MCF 10A (cell line): ENCODE measurements at regions of chr3 and their contacts with region 1.

Region 1: GRCh38 chr3:63911873-63912767 is at the start of gene SCAANT1:
- DNase-seq: peak; percentile 92
- H3K4me3 Mint-ChIP-seq: peak within 1 kb of the TSS; percentile 77
- H3K27ac Mint-ChIP-seq: peak within 1 kb of the TSS; percentile 91
- H3K4me1 Mint-ChIP-seq: no peaks in the 10 kb centered on the region
- H3K27me3 Mint-ChIP-seq: no peaks in the 10 kb centered on the region
- CTCF ChIP-seq: no peak
- total RNA-seq, gene SCAANT1: not detected in 2 replicates

Region 2: DNA sequence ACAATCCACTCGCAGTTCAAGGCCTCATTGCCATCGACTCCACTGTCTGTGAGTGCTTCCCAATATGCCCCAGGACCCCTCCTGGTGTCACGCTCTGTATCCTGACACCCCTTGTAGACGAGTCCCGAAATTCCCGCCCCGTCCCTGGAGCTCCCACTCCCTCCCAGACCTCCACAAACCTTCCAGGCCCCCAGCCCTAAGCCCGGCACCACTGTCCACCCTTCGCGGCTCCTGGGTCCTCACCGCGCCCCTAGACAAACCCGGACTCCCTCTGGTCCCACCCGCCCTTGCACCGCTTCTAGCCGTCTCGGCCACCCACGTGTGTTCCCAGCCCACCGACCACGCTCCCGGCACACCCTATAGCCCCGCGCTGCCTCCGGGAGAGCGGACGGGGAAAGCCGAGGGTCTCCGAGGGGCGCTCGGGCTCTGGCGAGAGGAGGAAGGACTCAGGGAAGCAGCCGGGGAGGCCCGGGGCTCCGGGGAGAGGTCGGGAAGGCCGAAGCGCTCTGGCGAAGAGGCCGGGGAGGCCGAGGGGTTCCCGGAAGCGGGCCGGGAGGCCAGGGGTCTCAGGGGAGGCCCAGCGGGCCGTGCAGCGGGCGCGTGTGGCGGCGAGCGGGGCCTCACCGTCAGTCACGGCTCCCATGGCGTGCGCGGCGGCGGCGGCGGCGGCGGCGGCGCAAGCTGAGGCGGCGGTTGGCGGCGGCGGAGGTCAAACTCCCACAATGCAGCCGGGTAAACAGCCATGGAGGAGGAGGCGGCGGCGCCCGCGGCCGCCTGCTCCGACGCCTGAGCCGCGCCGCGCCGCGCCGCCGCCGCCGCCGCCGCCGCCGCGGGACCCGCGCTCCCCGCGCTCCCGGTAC is 48.7 kb before region 1 on chr3 and contains the starts of genes ATXN7 and THOC7:
- CTCF ChIA-PET with region 1: no interaction called
- POLR2A ChIA-PET with region 1: interaction called, 11 read pairs
- intact Hi-C with region 1: loop called (anchors 1 kb)
- DNase-seq: peak; percentile 68
- H3K4me3 Mint-ChIP-seq: peak within 1 kb of the TSS; percentile 84
- H3K27ac Mint-ChIP-seq: peak within 1 kb of the TSS; percentile 84
- H3K4me1 Mint-ChIP-seq: peaks cover 46% of the 10 kb centered on the region
- H3K27me3 Mint-ChIP-seq: no peaks in the 10 kb centered on the region
- CTCF ChIP-seq: no peak
- total RNA-seq, gene ATXN7: 29.2 and 36.7 TPM in 2 replicates
- total RNA-seq, gene THOC7: 117 and 123 TPM in 2 replicates

Region 3: GRCh38 chr3:63937661-63938651 is 25.8 kb after region 1 on chr3:
- CTCF ChIA-PET with region 1: interaction called, 5 read pairs
- POLR2A ChIA-PET with region 1: interaction called, 15 read pairs
- intact Hi-C with region 1: no loop called
- DNase-seq: peak; percentile 66
- H3K4me3 Mint-ChIP-seq: no peak overlapping the region
- H3K27ac Mint-ChIP-seq: peak overlapping the region; percentile 57
- H3K4me1 Mint-ChIP-seq: peaks cover 44% of the 10 kb centered on the region
- H3K27me3 Mint-ChIP-seq: no peaks in the 10 kb centered on the region
- CTCF ChIP-seq: no peak

Region 4: DNA sequence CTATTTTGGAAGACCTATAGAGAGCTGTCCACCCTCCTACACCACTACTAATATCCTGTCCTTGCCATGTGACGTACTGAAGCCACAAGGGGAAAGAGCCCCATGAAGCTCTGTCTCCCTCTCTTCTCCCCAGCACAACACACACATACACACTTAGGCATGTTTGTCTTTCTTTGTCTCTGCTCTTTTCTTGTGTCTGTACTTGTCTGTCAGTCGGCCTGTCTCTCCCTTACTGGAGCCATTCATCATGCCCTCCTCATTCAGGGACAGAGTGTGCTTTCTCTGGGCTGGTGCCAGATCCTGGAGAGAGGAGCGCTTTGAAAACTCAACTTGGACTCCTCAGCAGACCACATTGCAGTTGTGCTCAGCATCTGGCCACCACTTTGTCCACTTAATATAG is 63.6 kb after region 1 on chr3:
- CTCF ChIA-PET with region 1: interaction called, 5 read pairs
- POLR2A ChIA-PET with region 1: interaction called, 19 read pairs
- intact Hi-C with region 1: loop called (anchors 1 kb)
- DNase-seq: peak; percentile 94
- H3K4me3 Mint-ChIP-seq: peak overlapping the region; percentile 45
- H3K27ac Mint-ChIP-seq: peak overlapping the region; percentile 86
- H3K4me1 Mint-ChIP-seq: peaks cover 63% of the 10 kb centered on the region
- H3K27me3 Mint-ChIP-seq: no peaks in the 10 kb centered on the region
- CTCF ChIP-seq: no peak

Region 5: DNA sequence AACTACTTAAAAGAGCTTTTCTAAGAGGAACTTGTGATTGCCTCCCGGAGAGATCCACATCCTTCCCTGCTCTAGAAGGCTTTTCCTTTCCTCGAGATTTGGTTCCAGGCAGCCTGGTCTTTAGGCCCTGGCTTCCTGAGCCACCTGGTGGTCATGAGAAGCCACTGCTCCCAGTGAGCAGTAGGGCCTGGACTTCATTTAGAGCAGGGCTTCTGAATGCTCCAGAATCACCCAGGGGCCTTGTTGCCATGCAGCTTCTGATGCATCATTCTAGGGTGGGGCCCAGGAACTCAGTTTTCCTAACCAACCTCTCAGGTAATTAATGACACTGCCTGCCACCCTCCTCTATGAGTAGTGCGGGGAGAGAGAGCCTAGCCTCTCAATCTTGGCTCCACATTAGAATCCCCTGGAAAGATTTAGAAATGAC is 81.5 kb after region 1 on chr3:
- CTCF ChIA-PET with region 1: interaction called, 8 read pairs
- POLR2A ChIA-PET with region 1: interaction called, 3 read pairs
- intact Hi-C with region 1: loop called (anchors 1 kb)
- DNase-seq: peak; percentile 77
- H3K4me3 Mint-ChIP-seq: no peak overlapping the region
- H3K27ac Mint-ChIP-seq: peak overlapping the region; percentile 23
- H3K4me1 Mint-ChIP-seq: no peaks in the 10 kb centered on the region
- H3K27me3 Mint-ChIP-seq: no peaks in the 10 kb centered on the region
- CTCF ChIP-seq: peak; percentile 83